ENCODE measurements at regions of chr11 and their contacts with region 1.

Region 1: DNA sequence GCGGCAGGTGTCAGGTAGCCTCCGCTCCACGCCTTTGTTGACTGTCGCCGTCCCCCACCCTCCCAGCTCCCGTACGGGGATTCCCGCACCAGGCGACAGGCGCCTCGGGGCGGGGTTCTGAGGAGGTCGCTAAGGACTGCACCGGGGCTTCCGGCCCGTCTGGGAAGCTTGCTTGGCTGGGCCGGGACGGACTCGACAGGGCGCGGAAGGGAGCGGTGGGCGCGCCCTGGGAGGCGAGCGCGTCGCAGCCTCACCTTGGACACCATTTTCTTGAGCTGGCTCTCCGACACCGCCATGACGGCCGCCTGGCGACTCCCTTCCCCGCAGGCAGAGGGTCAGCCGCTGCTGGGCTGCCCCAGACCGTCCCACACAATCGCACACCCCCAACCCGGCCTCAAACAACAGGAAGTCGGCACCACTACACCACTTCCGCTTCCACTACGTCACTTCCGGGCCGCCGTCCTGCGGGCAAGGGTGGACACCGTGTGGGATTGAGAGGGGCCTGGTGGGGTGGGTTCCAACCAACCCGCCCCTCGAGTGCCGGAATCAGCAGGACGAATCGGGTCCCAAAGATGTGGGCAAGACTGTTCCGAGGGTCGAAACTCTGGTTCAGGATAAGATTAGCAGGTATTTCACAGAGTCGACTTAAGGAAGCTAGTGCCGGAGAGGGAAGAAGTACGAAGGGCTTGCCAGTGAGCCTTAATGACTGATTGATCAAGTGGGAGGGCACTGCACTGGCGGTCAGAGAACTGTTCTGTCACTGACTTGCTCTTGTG is at the start of gene TSG101:
- DNase-seq: peak; percentile 92
- H3K4me3 ChIP-seq: peak within 1 kb of the TSS; percentile 86
- H3K27ac ChIP-seq: peak within 1 kb of the TSS; percentile 87
- H3K4me1 ChIP-seq: peaks cover 68% of the 10 kb centered on the region
- CTCF ChIP-seq: no peak
- total RNA-seq, gene TSG101: 56.9 and 96.8 TPM in 2 replicates

Region 2: DNA sequence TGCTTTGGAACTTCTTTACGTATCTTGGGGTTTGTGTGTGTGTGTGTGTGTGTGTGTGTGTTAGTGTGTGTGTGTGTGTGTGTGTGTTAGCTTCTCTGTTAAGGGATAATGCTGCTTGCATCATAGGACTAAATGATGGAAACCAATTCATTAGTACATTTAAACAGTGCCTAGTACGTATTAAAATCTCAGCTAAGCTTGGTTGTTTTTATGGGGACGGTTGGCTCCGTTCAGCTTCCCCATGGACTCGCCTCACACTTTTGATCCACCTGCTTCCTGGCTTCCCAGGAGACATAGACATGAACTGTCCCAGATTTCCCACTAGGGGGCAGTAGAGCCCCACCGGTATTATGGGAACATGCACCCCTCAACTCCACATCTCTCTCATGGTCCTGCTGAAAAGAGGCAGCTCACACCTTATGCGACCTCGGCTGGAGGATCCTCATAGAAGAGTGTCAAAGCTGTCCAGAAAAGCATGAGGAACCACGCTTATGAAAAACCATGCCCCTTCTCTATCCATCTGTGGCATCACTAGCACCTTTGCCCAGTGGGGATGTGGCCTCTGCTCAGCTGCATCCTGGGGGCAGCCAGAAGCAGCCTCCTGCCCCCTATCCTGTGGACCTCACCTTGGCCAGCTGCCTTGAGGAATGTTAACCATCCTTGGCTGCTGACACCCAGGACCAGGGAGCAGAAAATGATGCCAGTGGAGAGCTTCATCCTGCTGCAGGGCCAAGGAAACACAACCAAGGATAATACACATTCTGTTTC is 411.2 kb before region 1 on chr11:
- CTCF ChIA-PET with region 1: no interaction called
- POLR2A ChIA-PET with region 1: no interaction called
- intact Hi-C with region 1: loop called (anchors 5 kb)
- DNase-seq: peak; percentile 85
- H3K4me3 ChIP-seq: no peak overlapping the region
- H3K27ac ChIP-seq: no peak overlapping the region
- H3K4me1 ChIP-seq: peaks cover 8% of the 10 kb centered on the region
- CTCF ChIP-seq: peak; percentile 97

Region 3: GRCh38 chr11:18243783-18244362 is 282.8 kb before region 1 on chr11:
- CTCF ChIA-PET with region 1: no interaction called
- POLR2A ChIA-PET with region 1: interaction called, 4 read pairs
- intact Hi-C with region 1: loop called (anchors 5 kb)
- DNase-seq: peak; percentile 81
- H3K4me3 ChIP-seq: no peak overlapping the region
- H3K27ac ChIP-seq: no peak overlapping the region
- H3K4me1 ChIP-seq: peaks cover 21% of the 10 kb centered on the region
- CTCF ChIP-seq: peak; percentile 95

Region 4: DNA sequence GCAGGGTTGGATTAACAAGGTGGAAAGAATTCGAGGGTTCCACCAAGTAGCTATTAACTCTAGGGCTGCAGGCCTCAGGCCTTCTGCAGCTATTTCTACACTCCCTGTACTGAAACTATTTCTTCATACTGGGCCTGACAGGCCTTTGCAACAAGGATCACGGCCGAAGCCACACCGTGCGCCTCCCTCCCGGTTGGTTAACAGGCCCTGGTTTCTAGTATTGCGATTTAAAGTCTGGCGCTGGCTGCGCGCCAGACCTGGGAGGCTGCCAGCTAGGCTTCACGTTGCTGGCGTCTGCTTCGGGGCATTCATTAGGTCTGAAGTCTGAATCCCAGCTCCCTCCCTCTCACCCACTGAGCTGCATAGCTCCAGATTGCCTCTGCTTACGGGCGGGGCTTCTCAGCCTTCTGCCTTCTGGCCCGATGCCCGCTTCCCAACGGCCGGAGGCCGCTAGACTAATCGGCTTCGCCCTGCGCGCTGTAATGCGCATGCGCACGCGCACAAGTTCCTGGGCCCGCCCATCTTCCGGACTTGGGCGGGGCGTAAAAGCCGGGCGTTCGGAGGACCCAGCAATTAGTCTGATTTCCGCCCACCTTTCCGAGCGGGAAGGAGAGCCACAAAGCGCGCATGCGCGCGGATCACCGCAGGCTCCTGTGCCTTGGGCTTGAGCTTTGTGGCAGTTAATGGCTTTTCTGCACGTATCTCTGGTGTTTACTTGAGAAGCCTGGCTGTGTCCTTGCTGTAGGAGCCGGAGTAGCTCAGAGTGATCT is 130.8 kb before region 1 on chr11:
- CTCF ChIA-PET with region 1: no interaction called
- POLR2A ChIA-PET with region 1: interaction called, 17 read pairs
- intact Hi-C with region 1: loop called (anchors 2 kb)
- DNase-seq: peak; percentile 98
- H3K4me3 ChIP-seq: peak overlapping the region; percentile 89
- H3K27ac ChIP-seq: peak overlapping the region; percentile 90
- H3K4me1 ChIP-seq: peaks cover 30% of the 10 kb centered on the region
- CTCF ChIP-seq: no peak

Region 5: DNA sequence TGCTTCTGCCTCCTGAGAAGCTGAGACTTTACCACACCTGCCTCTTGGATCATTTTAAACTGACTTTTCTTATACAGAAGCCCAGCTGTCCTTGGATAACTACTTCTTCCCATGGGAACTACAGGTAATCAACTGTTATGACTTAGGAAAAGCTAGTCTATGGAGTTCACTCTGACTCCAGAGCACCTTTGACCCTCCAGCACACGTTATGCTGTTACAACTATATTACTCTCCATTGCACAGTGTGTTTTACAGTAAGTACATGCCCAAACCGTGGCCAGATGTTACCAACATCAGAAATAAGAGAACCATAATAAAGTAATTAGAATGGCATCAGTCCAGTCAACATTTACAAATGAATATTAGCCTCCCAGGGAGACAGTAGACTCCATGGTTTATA is 21.3 kb after region 1 on chr11:
- CTCF ChIA-PET with region 1: no interaction called
- POLR2A ChIA-PET with region 1: no interaction called
- intact Hi-C with region 1: no loop called
- DNase-seq: no peak
- H3K4me3 ChIP-seq: no peak overlapping the region
- H3K27ac ChIP-seq: no peak overlapping the region
- H3K4me1 ChIP-seq: no peaks in the 10 kb centered on the region
- CTCF ChIP-seq: no peak

Region 6: DNA sequence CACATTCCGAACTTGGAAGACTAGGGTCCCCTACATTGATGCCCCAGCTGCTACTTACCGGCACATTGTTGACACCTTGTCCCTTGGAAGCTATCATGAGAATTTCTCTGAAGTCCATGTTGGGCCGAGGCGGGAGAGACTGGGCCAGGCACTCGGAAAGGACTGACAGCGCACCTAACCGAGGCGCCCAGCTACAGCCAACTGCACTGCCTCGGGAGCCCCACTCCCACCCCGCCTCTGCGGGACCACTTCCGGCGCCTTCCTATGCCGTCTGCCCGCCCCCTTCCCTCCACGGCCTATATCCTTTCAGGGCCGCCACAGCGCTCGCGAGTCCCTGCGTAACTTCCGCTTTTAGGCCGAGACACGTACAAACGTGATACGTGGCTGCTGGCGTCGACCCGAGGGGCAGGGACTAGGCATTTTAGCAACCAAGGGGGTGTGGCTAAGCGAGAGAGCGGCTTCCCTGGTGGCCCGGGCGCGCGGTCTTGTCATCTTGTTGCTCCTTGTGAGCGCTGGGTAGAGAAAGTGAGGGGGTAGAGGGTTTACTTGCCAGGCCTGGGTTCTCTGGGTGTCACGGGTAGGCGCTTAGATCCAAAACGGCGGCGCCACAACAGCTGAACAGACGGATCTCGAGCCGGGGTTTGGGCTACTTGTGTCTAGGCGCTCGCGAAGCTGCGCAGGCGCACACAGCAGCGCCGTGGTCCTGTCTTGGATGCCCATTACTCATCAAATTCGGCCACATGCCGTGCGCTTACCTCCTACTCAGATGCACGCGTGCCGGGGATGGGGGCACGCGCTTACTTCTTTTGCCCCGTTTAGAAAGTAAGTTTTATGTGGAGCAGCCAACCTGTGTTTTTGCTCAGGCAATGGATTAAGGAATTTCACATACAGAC is 107.7 kb after region 1 on chr11 and contains the start of gene SPTY2D1:
- CTCF ChIA-PET with region 1: interaction called, 14 read pairs
- POLR2A ChIA-PET with region 1: interaction called, 7 read pairs
- intact Hi-C with region 1: loop called (anchors 2 kb)
- DNase-seq: peak; percentile 100
- H3K4me3 ChIP-seq: peak within 1 kb of the TSS; percentile 90
- H3K27ac ChIP-seq: peak within 1 kb of the TSS; percentile 67
- H3K4me1 ChIP-seq: peaks cover 16% of the 10 kb centered on the region
- CTCF ChIP-seq: no peak
- total RNA-seq, gene SPTY2D1: 15.6 and 15.8 TPM in 2 replicates